ENCODE measurements at regions of chr14 and their contacts with region 1.

Region 1: DNA sequence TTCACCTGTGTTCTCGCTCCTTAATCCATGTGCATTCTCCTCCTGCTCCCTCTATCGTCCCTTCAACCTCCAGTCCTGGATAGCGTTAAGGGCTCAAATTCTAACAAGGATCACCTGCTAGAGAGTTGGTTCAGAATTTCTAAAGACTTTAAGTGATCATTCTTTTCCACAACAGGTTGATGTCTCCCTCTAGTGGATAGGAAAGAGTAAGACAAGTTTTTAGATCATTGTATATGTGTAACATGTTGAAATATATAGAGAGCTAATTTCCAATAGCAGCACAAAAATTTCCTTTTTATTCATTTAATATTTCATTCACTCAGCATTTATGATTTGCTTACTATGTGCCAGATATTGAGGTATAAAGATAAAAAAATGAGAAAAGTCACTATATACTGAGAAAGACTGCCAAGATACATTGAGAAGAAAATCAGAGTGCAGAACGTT is 9.3 kb upstream of the ESR2 start:
- DNase-seq: no peak
- H3K4me3 ChIP-seq: no peak overlapping the region
- H3K27me3 ChIP-seq: peaks cover under 1% of the 10 kb centered on the region; the same call in 1 of the 2 replicates
- CTCF ChIP-seq: peak; percentile 73

Region 2: DNA sequence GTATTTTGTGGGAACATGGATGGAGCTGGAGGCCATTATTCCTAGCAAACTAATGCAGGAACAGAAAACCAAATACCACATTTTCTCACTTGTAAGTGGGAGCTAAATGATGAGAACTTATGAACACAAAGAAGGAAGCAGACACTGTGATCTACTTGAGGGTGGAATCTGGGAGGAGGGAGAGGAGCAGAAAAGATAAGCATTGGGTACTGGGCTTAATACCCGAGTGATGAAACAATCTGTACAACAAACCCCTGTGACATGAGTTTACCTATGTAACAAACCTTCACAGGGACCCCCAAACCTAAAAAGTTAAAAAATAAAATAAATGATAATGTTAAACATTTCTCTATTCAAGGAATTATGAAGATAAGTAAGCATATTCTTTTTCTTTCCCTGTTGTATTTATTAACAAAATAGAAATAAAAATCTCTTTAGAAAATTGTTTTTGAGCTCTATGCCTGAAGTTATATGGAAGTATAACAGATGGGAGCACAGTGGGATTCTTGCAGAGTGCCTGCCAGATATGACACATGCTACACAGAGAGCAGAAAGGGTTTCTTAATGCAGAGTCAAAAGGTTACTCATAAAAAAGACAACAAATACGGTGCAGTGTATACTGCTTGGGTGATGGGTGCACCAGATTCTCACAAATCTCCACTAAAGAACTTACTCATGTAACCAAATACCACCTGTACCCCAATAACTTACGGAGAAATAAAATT is 502.7 kb before region 1 on chr14:
- CTCF ChIA-PET with region 1: interaction called, 36 read pairs
- POLR2A ChIA-PET with region 1: interaction called, 3 read pairs
- DNase-seq: no peak
- H3K4me3 ChIP-seq: no peak overlapping the region
- H3K27me3 ChIP-seq: no peaks in the 10 kb centered on the region
- CTCF ChIP-seq: no peak

Region 3: DNA sequence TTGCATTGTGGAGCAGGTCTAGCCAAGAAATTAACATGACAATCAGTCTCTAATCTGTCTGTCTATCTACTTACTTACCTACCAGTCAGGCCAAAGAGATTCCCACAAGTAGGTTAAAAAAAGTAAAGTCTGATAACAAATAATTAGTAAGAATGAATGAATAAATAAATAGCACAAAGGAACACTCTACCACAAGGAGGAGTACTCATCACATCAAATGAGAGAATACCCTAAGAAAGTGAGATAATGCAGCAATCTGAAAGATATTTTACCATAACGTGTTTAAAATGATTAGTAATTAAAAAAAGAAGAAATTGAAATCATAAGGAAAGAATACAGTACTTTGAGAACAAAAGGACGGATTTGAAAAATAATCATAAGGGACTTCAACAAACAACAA is 263.4 kb before region 1 on chr14:
- CTCF ChIA-PET with region 1: interaction called, 25 read pairs
- POLR2A ChIA-PET with region 1: no interaction called
- DNase-seq: no peak
- H3K4me3 ChIP-seq: no peak overlapping the region
- H3K27me3 ChIP-seq: no peaks in the 10 kb centered on the region
- CTCF ChIP-seq: peak; percentile 35

Region 4: GRCh38 chr14:65446159-65446558 is 1142.7 kb after region 1 on chr14:
- CTCF ChIA-PET with region 1: no interaction called
- POLR2A ChIA-PET with region 1: no interaction called
- DNase-seq: no peak
- H3K4me3 ChIP-seq: no peak overlapping the region
- H3K27me3 ChIP-seq: no peaks in the 10 kb centered on the region
- CTCF ChIP-seq: no peak

Measured in BJ (cell line).